Ascending aorta (tissue), 2 donors: ENCODE measurements at regions of chr19 and their contacts with region 1.

Region 1: DNA sequence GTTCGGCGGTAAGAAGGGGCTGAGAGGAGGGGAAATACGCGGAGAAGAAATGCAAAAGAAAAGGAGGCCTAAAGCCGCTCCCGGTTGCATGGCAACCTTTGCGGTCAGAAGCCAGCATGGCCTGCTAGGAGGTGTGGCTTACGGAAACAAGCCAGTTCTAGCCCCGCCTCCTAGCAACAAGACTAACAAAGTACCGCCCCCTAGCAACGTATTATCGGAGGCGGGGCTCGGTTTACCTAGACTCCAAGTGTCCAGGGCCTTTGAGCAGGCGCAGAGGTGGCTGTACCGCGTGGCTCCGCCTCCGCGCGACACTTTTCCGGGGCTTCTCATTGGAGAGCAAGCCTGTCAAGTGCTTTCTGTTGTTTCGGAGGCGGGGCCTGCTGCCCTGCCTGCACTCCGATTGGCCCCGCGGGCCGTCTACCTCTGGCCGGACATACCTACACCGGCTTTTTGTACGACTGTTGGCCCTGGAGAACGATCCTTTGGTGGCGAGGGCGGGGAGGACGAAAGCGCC is 337 bp upstream of the CYTH2 start:
- DNase-seq: peak; percentile 100
- H3K4me3 ChIP-seq: peak overlapping the region; percentile 90 to 91
- H3K27ac ChIP-seq: peak overlapping the region; percentile 97 to 99
- H3K4me1 ChIP-seq: peaks cover 11 to 13% of the 10 kb centered on the region in 2 donors
- H3K27me3 ChIP-seq: no peaks in the 10 kb centered on the region
- CTCF ChIP-seq: no peak

Region 2: GRCh38 chr19:48321622-48322591 is 146.9 kb before region 1 on chr19:
- intact Hi-C with region 1: loop called (anchors 1 kb)
- DNase-seq: peak; percentile 94 to 99
- H3K4me3 ChIP-seq: peak overlapping the region; percentile 55 to 79
- H3K27ac ChIP-seq: peak overlapping the region; percentile 97 to 99
- H3K4me1 ChIP-seq: peaks cover 0 to 31% of the 10 kb centered on the region in 2 donors
- H3K27me3 ChIP-seq: no peaks in the 10 kb centered on the region
- CTCF ChIP-seq: no peak

Region 3: DNA sequence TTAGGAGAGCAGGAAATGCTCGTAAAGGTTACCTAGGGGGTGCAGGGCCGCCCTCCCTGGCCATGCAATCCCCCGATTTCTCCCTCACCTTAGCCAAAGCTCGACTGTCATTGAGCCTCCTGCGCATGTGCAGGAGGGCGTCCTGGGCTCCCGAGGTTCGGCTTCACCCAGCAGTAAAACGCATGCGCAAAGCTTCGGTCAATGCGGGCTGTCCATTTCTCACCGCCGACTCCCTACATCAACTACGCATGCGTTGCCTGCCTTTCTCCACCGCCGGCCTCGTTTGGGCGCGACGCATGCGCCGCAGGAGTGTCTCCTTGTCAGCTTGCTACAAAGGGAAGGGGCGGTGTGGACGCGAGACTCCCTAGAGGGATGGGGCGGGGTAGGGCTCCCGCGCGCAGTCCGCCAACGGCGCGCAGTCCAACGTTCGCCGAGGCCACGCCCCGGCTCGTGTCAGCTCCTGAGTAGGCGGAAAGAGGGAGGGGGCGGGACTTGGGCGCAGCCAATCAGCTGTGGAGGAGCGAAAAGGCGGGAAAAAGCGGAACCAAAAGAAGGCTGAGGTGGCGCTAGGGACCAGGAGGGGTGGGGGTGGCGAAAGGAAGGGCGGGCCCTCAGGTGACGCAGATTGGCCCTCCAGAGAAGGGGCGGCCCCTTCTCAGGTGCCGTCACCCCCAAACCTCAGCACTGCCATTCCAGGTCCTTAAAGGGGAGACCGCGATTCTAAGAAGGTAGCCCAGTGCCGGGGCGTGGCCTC is 104.8 kb before region 1 on chr19 and contains the starts of genes SYNGR4 and TMEM143:
- intact Hi-C with region 1: loop called (anchors 1 kb)
- DNase-seq: peak; percentile 99
- H3K4me3 ChIP-seq: peak within 1 kb of the TSS; percentile 61 to 65
- H3K27ac ChIP-seq: peak within 1 kb of the TSS; percentile 72 to 81
- H3K4me1 ChIP-seq: peaks cover 0 to 4% of the 10 kb centered on the region in 2 donors
- H3K27me3 ChIP-seq: no peaks in the 10 kb centered on the region
- CTCF ChIP-seq: no peak
- total RNA-seq, gene SYNGR4: not detected
- total RNA-seq, gene TMEM143: 25.3 TPM

Region 4: DNA sequence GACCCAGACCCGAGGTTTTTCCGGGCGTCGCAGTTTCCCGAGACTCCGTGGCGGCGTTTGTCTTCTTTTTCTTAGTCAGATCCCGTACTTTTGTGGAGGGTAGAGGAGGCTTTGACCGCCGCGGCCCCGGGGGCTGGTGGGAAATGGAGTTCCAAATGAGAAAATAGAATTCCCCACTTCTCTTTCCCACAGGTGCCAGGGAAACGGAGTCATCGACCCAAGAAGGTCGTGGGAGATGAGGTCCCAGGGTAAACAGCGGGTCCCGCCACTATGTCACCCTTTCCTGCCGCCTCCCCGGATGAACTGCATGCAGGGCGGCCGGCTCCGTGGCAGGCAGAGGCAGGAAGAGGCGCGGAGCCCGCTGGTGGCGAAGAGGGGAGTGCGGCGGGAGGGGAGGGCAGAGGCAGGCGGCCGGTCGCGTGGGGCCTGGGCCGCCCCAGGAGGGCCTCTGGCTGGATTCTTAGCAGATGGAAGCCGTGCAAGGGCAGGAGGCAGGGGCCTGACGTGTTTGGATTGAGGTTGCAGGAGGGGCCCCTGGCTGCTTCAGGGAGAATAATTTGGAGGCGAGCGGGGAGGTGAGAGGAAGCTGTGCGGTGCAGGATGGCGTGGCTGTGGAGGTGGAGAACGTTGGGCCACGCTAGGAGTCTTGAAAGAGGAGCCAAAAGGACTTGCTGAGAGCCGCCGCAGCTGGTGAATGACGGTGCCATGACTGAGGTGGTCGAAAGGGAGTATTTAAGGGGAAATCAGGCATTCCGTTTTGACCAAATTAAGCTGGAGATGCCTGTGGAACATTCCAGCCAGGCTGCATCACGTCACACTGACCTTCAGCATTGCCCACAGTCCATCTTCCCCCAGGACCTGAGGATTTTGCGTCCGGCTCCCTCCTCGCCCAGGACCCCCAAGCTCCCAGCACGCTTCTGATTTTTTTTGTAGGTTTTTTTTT is 12.0 kb after region 1 on chr19:
- intact Hi-C with region 1: loop called (anchors 1 kb)
- DNase-seq: no peak
- H3K4me3 ChIP-seq: peak overlapping the region; percentile 64 to 76
- H3K27ac ChIP-seq: peak overlapping the region; percentile 94 to 96
- H3K4me1 ChIP-seq: peaks cover 8 to 9% of the 10 kb centered on the region in 2 donors
- H3K27me3 ChIP-seq: no peaks in the 10 kb centered on the region
- CTCF ChIP-seq: peak in 1 of 3 experiments; percentile 7

Region 5: DNA sequence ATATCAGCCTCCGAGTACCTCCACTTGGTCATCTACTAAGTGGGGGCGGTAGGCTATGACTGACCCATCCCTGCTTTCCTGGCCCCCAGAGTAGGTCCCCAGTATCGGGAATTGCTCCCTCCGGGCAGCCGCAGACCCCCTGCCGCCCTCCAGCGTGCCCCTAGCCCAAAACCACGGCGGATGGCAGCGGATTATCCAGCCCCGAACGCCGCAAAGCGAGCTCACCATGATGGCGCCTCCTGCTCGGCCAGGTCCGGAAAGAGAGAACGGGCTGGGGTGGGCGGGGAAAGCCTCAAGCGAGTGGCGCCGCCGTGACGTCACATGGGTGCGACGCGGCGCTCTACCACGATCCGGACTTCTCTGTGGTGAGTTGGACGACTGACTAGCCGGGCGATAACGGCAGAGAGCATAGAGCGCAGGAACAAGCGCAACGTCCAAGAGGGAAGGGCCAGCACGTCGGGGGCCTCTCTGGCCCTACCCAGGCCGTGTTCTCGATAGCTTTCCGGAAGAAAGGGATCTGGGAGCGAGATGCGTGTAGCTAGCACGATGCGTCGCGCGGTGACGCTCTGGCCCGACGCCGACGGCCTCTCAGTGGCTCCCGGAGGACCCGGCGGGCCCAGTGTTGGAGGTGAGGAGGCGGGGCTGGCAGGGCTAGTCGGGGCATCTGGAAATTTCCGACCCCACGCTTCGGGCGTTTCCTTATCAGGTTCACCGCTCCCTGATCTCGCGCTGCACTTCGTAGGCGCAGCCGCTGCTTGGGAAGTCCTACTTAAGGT is 150.3 kb after region 1 on chr19 and contains the starts of genes RPL18 and SPHK2:
- intact Hi-C with region 1: loop called (anchors 1 kb)
- DNase-seq: peak; percentile 94 to 99
- H3K4me3 ChIP-seq: peak within 1 kb of the TSS; percentile 68 to 95
- H3K27ac ChIP-seq: peak within 1 kb of the TSS; percentile 86 to 87
- H3K4me1 ChIP-seq: peaks cover 16 to 27% of the 10 kb centered on the region in 2 donors
- H3K27me3 ChIP-seq: no peaks in the 10 kb centered on the region
- CTCF ChIP-seq: no peak
- total RNA-seq, gene RPL18: 2,223 TPM
- total RNA-seq, gene SPHK2: 35.3 TPM